Prostate gland (tissue), 2 donors: ENCODE measurements at regions of chr1 and their contacts with region 1.

Region 1: DNA sequence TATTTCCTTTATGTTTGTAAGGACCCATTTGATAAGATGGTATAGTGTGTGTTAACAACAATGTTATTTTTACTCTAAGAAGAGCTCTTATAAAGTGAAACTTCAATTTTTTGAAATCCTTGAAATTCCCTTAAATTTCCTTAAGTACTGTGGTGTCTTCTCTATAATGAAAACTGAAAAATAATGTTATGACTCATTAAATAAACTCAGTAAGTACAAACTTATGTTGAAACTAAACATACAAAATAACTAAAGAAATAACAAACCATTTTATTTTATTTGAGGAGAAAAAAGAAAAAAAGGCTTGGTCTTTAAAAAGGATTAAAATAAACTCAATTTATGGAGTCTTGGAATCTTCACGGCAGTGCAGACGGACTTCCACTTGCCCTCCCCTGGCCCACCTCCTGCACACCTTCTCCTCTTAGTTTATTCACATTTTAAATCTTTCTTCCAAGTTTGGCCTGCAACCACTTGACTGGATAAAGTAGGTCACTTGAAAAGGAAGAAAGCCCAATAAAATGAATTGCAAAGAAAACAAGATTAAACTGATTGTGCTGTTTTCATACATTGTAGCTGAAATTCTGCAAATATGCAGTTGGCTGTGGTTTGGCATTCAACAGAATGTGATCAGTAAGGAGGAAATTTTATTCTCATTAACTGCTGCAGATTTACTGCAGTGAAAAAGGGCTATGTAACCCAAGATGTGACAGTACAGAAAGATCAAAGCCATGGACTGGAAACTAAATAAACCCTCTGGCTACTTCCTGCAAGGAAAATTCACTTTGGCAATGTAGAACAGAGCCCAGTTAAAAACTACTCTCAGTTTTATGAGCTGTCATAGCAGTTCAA is 48.5 kb upstream of the SCYL3 start:
- DNase-seq: peak; percentile 55
- H3K4me3 ChIP-seq: no peak overlapping the region
- H3K27ac ChIP-seq: no peak overlapping the region
- H3K4me1 ChIP-seq: no peaks in the 10 kb centered on the region
- H3K27me3 ChIP-seq: no peaks in the 10 kb centered on the region
- CTCF ChIP-seq: no peak
- POLR2A ChIP-seq: no peak

Region 2: GRCh38 chr1:169509351-169509750 is 432.9 kb before region 1 on chr1:
- intact Hi-C with region 1: no loop called
- DNase-seq: no peak
- H3K4me3 ChIP-seq: no peak overlapping the region
- H3K27ac ChIP-seq: no peak overlapping the region
- H3K4me1 ChIP-seq: peaks cover 4% of the 10 kb centered on the region
- H3K27me3 ChIP-seq: no peaks in the 10 kb centered on the region
- CTCF ChIP-seq: no peak
- POLR2A ChIP-seq: no peak

Region 3: DNA sequence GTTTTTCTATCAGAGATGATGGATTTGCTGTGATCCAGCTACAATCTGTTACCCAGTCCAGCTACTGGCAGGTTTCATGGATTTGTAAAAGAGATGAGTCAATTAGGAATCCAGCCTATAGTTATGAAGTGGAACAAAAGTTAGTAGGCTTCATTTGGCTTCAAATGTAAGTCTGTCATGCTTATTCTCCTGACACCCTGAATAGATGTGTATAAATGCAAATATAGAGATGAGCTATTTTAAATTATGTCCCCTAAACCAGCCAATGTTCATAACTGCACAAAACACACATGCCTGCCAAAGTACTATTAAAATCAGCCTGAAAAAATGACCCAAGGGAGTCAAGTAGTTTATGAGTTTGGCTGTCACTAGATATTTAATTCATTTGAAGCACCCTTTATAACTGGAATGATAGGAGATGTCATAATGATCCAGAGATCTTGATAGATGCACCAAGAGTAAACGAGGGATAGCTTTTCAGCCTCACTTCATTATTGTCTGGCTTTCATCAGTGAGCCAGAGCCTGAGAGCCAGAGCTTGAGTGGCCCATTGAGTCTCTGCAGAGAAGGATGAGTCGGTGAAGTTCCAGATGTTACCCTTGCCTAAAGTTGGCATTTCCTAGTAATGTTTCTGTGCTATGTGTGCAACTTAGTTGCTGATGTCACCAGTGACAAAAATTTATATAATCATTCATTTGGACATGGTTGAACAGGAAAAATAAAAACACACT is 191.7 kb after region 1 on chr1:
- intact Hi-C with region 1: loop called (anchors 10 kb)
- DNase-seq: no peak
- H3K4me3 ChIP-seq: no peak overlapping the region
- H3K27ac ChIP-seq: no peak overlapping the region
- H3K4me1 ChIP-seq: no peaks in the 10 kb centered on the region
- H3K27me3 ChIP-seq: no peaks in the 10 kb centered on the region
- CTCF ChIP-seq: no peak
- POLR2A ChIP-seq: no peak

Region 4: GRCh38 chr1:170214117-170215032 is 272.2 kb after region 1 on chr1:
- intact Hi-C with region 1: loop called (anchors 10 kb)
- DNase-seq: no peak
- H3K4me3 ChIP-seq: no peak overlapping the region
- H3K27ac ChIP-seq: no peak overlapping the region
- H3K4me1 ChIP-seq: no peaks in the 10 kb centered on the region
- H3K27me3 ChIP-seq: no peaks in the 10 kb centered on the region
- CTCF ChIP-seq: no peak
- POLR2A ChIP-seq: no peak